Sciatic nerve (tissue), 2 donors: ENCODE measurements at regions of chr6 and their contacts with region 1.

Region 1: GRCh38 chr6:31834434-31835198 is 7.1 kb downstream of the HSPA1B start:
- DNase-seq: peak; percentile 91
- ATAC-seq: peak; percentile 93

Region 2: GRCh38 chr6:31541658-31542521 is 292.7 kb before region 1 on chr6 and contains the start of gene DDX39B:
- intact Hi-C with region 1: loop called (anchors 10 kb)
- DNase-seq: peak; percentile 97
- ATAC-seq: peak; percentile 97
- total RNA-seq, gene DDX39B: 258 TPM

Region 3: DNA sequence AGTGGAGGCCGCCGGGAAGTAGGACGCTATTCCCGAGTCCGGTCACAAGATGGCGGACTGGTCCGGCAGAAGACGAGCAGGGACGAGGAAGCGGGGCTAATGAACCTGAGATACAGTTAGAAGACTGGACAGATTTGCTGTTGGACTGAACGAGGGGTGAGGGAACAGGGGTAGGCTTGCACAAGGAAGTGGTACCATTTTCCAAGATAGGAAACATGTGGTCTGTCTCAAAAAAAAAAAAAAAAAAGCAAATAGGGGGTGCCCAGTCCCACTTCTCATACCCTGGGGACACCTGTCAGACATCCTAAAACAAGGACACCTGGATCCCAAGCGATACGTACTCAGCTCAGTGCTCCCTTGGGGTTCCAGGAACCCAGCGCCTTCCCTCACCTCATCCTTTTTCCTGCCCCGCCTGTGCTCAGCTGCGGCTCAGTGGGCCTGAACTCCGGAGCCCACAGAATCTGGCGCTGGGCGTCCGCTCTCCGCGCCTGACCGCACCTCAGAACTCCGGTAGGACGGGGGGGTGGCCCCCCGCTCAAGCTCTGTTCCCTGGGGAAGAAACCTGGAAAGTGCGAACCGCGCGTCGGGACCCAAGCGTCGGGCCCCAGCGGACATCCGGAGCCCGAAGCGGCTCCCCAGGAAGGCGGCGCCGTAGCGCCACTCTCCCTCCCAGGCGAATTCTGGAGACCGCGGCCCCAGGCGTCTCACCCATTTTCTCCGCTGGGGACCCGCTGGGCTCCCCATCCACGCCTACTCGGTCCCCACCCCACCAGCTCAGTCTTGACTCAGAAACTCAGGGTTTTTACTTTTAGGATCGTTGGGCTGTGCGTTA is 153.6 kb before region 1 on chr6 and contains the start of gene LY6G5C:
- intact Hi-C with region 1: loop called (anchors 10 kb)
- DNase-seq: peak; percentile 90
- ATAC-seq: peak; percentile 84
- total RNA-seq, gene LY6G5C: 2.1 TPM

Region 4: DNA sequence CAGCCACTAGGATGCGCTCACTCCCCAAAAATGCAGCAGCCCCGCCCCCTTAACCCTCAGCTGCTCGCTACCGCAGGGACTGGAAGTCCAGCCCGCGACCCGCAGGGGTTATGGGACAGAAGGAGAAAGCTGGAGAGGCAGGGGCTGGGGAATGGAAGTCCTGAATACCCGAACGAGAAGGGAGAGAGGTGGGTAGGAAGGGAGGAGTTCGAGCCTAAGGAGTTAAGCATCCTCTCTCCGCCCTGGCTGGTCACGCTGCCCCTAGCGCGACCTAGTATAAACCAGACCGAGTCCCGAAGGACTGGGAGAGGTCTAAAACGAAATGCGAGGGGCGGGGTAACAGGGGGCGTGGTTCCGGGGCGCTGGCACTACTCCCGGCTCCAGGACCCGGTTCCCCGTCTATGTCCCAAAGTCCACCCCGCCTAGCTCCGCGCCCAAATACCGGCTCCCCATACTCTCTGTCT is 105.1 kb before region 1 on chr6:
- intact Hi-C with region 1: loop called (anchors 10 kb)
- DNase-seq: peak; percentile 98
- ATAC-seq: peak; percentile 94

Region 5: DNA sequence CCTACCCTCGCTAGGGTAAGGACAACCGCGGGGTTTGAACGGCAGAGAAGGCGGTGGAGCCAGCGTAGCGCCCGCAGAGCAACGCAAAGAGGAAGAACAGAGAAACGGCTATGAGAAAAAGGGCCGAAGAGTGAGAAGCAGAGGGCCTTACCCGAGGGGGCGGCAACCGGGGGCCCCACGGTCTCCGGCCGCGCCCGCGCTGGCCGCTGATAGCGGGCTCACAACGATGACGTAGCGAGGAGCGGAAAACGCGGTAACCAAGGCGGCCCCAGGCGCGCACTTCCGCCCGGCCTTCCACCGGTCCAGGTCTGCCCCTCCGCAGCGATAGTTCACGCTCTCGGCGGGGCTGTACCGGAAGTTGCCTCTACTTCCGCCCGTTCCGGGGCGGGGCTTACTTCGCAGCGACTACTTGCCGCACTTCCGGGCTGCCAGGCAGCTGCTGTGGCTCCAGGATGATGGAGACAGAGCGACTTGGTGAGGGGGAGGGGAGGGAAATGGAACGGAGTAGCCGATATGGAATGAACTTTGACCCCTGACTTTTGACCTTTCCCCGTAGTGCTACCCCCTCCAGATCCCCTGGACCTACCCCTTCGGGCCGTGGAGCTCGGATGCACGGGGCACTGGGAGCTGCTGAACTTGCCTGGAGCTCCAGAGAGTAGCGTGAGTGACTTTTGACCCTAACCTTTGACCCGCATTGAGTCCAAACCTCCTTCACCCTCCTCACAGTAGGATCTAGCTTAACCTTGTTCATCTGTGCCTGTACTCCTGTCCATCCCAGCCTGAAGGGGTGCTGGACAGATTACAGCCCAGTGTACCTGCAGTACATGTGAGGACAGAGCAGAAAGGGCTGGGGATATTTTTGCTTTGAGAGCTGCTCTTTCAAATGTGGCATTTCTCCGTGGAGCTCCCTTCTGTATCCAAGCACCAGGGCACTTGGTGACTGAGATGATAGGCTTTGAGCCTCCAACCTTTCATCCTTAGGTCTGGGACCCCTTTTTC is 124.4 kb after region 1 on chr6 and contains the starts of genes NELFE and SKIC2:
- intact Hi-C with region 1: no loop called
- DNase-seq: peak; percentile 99
- ATAC-seq: peak; percentile 99
- total RNA-seq, gene NELFE: 55.1 TPM
- total RNA-seq, gene SKIC2: 60.0 TPM